A673 (cell line): ENCODE measurements at regions of chr1 and their contacts with region 1.

Region 1: DNA sequence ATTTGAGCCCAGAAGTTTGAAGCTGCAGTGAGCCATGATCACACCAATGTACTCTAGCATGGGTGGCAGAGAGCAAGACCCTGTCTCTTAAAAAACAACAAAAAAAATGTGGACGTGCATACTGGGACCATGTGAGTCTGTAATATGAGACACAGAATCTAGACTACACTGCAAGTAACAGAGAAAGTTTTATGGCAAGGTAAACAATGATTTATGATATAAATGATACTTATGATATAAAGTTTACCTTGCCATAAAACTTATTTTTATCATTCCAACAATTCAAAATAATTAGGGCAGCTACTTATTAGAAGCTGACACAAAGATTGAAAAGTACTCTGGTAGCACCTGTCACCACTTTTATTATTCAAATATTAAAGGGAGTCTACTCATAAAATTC is 34.7 kb downstream of the WDR26 start:
- DNase-seq: no peak
- H3K4me3 ChIP-seq: no peak overlapping the region
- H3K27ac ChIP-seq: no peak overlapping the region
- H3K4me1 ChIP-seq: no peaks in the 10 kb centered on the region
- H3K27me3 ChIP-seq: no peaks in the 10 kb centered on the region
- CTCF ChIP-seq: no peak

Region 2: GRCh38 chr1:224411766-224412165 is 11.9 kb after region 1 on chr1:
- CTCF ChIA-PET with region 1: no interaction called
- POLR2A ChIA-PET with region 1: interaction called, 12 read pairs
- intact Hi-C with region 1: no loop called
- DNase-seq: no peak
- H3K4me3 ChIP-seq: no peak overlapping the region
- H3K27ac ChIP-seq: no peak overlapping the region
- H3K4me1 ChIP-seq: no peaks in the 10 kb centered on the region
- H3K27me3 ChIP-seq: no peaks in the 10 kb centered on the region
- CTCF ChIP-seq: no peak

Region 3: GRCh38 chr1:225962440-225962975 is 1562.6 kb after region 1 on chr1:
- CTCF ChIA-PET with region 1: no interaction called
- POLR2A ChIA-PET with region 1: interaction called, 14 read pairs
- intact Hi-C with region 1: no loop called
- DNase-seq: peak; percentile 50
- H3K4me3 ChIP-seq: no peak overlapping the region
- H3K27ac ChIP-seq: no peak overlapping the region
- H3K4me1 ChIP-seq: no peaks in the 10 kb centered on the region
- H3K27me3 ChIP-seq: no peaks in the 10 kb centered on the region
- CTCF ChIP-seq: peak; percentile 95